OCI-LY7 (cell line): ENCODE measurements at regions of chr5 and their contacts with region 1.

Region 1: GRCh38 chr5:164881442-164881841 is 1376.0 kb downstream of the MAT2B start:
- DNase-seq: no peak
- H3K4me3 ChIP-seq: no peak overlapping the region
- H3K27ac ChIP-seq: no peak overlapping the region
- H3K4me1 ChIP-seq: no peaks in the 10 kb centered on the region
- CTCF ChIP-seq: no peak

Region 2: GRCh38 chr5:164818445-164818844 is 63.0 kb before region 1 on chr5:
- CTCF ChIA-PET with region 1: no interaction called
- POLR2A ChIA-PET with region 1: no interaction called
- intact Hi-C with region 1: no loop called
- DNase-seq: no peak
- H3K4me3 ChIP-seq: no peak overlapping the region
- H3K27ac ChIP-seq: no peak overlapping the region
- H3K4me1 ChIP-seq: no peaks in the 10 kb centered on the region
- CTCF ChIP-seq: no peak

Region 3: DNA sequence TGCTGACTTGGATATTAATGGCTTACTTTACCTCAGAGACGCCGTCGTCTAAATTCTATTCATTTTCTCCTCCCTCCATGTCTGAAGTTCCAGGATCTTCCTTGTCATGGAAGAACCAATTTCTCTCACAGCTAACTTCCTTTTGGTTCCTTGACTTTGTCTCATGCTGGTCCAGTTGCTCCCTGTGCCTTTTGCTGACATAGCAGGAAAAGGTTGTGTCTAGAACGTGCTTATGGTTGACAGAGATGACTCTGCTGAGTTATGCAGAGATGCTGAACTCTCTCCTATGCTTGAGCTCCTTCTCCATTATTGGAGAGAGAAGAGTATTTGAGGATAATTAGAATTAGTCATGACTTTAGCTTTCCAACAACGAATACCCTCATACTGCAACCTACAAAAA is 37.1 kb before region 1 on chr5:
- CTCF ChIA-PET with region 1: no interaction called
- POLR2A ChIA-PET with region 1: no interaction called
- intact Hi-C with region 1: no loop called
- DNase-seq: no peak
- H3K4me3 ChIP-seq: no peak overlapping the region
- H3K27ac ChIP-seq: no peak overlapping the region
- H3K4me1 ChIP-seq: no peaks in the 10 kb centered on the region
- CTCF ChIP-seq: no peak

Region 4: DNA sequence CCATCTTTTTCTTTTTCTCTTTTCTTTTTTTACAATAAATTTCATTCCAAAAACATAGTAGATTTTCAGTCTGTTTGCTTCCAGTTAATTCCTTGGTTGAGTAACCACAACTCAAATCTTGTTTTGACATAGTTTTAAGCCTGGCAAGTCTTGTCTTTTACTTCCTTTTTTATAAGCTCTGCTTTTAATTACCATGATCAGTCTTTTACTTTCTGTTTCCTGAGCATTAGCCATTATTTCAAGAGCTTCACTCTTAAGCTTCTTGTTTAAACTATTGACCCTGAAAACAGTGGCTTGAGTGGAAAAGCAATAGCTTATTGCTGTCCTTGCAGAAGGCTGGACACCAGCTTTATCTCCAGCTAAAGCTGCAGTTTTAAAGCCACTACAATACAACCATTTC is 12.7 kb before region 1 on chr5:
- CTCF ChIA-PET with region 1: no interaction called
- POLR2A ChIA-PET with region 1: no interaction called
- intact Hi-C with region 1: loop called (anchors 1 kb)
- DNase-seq: no peak
- H3K4me3 ChIP-seq: no peak overlapping the region
- H3K27ac ChIP-seq: no peak overlapping the region
- H3K4me1 ChIP-seq: no peaks in the 10 kb centered on the region
- CTCF ChIP-seq: no peak

Region 5: GRCh38 chr5:164975986-164976385 is 94.5 kb after region 1 on chr5:
- CTCF ChIA-PET with region 1: no interaction called
- POLR2A ChIA-PET with region 1: no interaction called
- intact Hi-C with region 1: no loop called
- DNase-seq: no peak
- H3K4me3 ChIP-seq: no peak overlapping the region
- H3K27ac ChIP-seq: no peak overlapping the region
- H3K4me1 ChIP-seq: no peaks in the 10 kb centered on the region
- CTCF ChIP-seq: no peak